SK-N-SH (cell line): ENCODE measurements at regions of chr14 and their contacts with region 1.

Region 1: GRCh38 chr14:58501214-58501816 is 73.8 kb downstream of the KIAA0586 start:
- DNase-seq: peak; percentile 37
- H3K4me3 ChIP-seq: no peak overlapping the region
- H3K27ac ChIP-seq: no peak overlapping the region
- H3K4me1 ChIP-seq: no peaks in the 10 kb centered on the region
- H3K27me3 ChIP-seq: no peaks in the 10 kb centered on the region
- CTCF ChIP-seq: peak; percentile 95
- EP300 ChIP-seq: no peak
- RAD21 ChIP-seq: peak; percentile 97

Region 2: DNA sequence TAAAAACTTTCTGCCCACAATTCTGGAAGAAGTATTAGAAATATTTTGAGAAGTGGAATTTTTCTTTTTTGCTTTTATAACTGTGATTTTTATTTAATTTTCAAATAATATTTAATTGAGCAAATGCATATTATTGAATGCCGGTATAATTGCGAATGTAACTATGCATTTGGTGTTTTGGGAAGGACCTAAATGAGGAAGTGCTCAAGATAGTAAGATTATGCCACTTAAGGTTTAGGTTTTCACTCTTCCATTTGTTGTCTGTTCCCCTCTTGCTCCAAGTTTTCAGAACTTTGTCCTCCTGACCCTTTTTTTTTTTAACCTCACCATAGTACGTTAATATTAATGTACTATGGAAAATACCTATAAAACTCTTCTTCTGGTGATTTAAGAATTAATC is 12.0 kb after region 1 on chr14:
- CTCF ChIA-PET with region 1: interaction called, 20 read pairs
- POLR2A ChIA-PET with region 1: no interaction called
- DNase-seq: no peak
- H3K4me3 ChIP-seq: no peak overlapping the region
- H3K27ac ChIP-seq: no peak overlapping the region
- H3K4me1 ChIP-seq: no peaks in the 10 kb centered on the region
- H3K27me3 ChIP-seq: no peaks in the 10 kb centered on the region
- CTCF ChIP-seq: no peak
- EP300 ChIP-seq: no peak
- RAD21 ChIP-seq: no peak

Region 3: DNA sequence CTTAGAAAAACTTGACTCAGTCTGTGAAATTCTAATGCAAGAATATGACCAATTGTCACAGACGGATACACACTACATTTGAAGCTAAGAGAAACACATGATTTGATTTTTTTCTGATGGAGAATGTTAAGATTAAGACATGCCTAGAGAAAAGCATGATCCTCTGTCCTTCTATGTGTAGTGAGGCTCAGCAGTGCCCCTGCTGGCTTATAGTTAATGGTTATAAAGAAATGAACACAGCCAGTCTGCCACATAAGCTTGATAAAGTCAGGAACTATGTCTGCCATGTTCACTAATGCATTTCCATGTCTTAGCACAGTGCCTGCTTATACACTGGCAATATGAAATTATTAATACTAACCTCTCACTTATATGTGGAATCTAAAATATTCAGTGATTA is 519.1 kb after region 1 on chr14:
- CTCF ChIA-PET with region 1: interaction called, 19 read pairs
- POLR2A ChIA-PET with region 1: no interaction called
- DNase-seq: peak; percentile 8
- H3K4me3 ChIP-seq: no peak overlapping the region; a peak in 1 of 4 replicates
- H3K27ac ChIP-seq: no peak overlapping the region
- H3K4me1 ChIP-seq: no peaks in the 10 kb centered on the region; a peak in 2 of 4 replicates
- H3K27me3 ChIP-seq: no peaks in the 10 kb centered on the region
- CTCF ChIP-seq: peak; percentile 62
- EP300 ChIP-seq: no peak
- RAD21 ChIP-seq: peak; percentile 60

Region 4: GRCh38 chr14:59055439-59056045 is 554.2 kb after region 1 on chr14:
- CTCF ChIA-PET with region 1: interaction called, 25 read pairs
- POLR2A ChIA-PET with region 1: no interaction called
- DNase-seq: peak; percentile 65
- H3K4me3 ChIP-seq: no peak overlapping the region
- H3K27ac ChIP-seq: no peak overlapping the region
- H3K4me1 ChIP-seq: no peaks in the 10 kb centered on the region
- H3K27me3 ChIP-seq: no peaks in the 10 kb centered on the region
- CTCF ChIP-seq: peak; percentile 88
- EP300 ChIP-seq: no peak
- RAD21 ChIP-seq: peak; percentile 84

Region 5: GRCh38 chr14:59126710-59127432 is 625.6 kb after region 1 on chr14:
- CTCF ChIA-PET with region 1: interaction called, 31 read pairs
- POLR2A ChIA-PET with region 1: no interaction called
- DNase-seq: peak; percentile 64
- H3K4me3 ChIP-seq: no peak overlapping the region; a peak in 1 of 4 replicates
- H3K27ac ChIP-seq: no peak overlapping the region
- H3K4me1 ChIP-seq: peaks cover 0 to 2% of the 10 kb centered on the region in 2 experiments; a peak in 1 of 4 replicates
- H3K27me3 ChIP-seq: no peaks in the 10 kb centered on the region
- CTCF ChIP-seq: peak; percentile 89
- EP300 ChIP-seq: no peak
- RAD21 ChIP-seq: peak; percentile 98